OCI-LY7 (cell line): ENCODE measurements at regions of chr1 and their contacts with region 1.

Region 1: DNA sequence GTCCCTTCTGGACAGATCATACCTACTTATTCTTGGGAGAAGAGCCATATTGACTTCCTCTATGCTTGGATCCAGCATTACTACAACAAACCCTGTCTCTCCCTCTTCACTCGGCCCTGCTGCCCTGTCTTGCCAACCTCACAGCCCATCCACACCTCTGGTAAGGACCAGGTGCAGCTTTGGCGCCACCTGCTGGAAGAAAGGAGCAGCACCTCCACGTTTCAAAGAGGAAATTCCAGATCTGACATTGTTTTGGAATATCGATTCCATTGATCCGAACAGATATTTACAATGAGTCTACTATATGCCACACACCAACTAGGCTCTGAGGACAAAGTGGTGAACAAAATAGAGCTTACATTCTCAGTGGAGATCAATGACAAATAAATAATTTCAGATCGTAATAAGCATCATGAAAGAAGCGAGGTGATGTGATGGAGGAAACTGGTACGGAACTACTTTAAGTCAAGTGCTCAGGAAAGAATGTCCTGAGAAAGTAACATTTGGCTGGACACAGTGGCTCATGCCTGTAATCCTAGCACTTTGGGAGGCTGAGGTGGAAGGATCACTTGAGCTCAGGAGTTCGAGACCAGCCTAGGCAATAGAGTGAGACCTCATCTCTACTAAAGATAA is 18.7 kb downstream of the MFSD2A start:
- DNase-seq: peak; percentile 77
- H3K4me3 ChIP-seq: no peak overlapping the region
- H3K27ac ChIP-seq: no peak overlapping the region
- H3K4me1 ChIP-seq: no peaks in the 10 kb centered on the region
- CTCF ChIP-seq: peak; percentile 100

Region 2: DNA sequence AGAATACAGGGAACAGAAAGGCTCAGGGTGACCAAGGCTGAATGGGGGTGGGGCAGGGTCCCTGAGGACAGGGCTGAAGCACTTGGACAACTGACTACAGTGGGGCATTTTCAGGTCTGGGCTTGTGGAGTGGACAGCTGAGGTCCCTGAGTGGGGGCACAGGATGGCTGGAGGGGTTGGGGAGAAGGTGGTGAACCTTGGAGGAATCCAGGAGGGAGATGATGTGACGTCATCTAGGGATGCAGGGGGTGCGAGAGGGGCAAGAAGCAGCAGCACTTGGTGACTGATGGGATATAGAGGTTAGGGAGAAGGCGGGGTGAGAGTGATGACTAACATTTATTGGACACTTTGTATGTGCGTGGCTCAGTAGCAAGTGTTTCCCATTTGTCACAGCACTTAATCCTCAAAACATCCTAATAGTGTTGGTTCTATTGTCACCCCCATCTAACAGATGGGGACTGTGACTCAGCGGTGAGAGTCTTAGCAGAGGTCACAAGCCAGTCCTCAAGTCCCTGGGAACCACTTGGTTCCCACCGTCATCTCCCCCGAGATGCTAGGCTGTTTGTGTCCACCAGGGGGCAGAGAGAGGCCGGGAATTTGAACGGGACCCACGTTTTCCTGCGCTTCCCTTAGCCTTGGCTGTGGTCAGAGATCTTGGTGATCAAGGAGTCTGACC is 157.1 kb before region 1 on chr1:
- CTCF ChIA-PET with region 1: no interaction called
- POLR2A ChIA-PET with region 1: no interaction called
- intact Hi-C with region 1: loop called (anchors 1 kb)
- DNase-seq: peak; percentile 77
- H3K4me3 ChIP-seq: peak overlapping the region; percentile 54
- H3K27ac ChIP-seq: peak overlapping the region; percentile 52
- H3K4me1 ChIP-seq: no peaks in the 10 kb centered on the region
- CTCF ChIP-seq: peak; percentile 80

Region 3: GRCh38 chr1:39919545-39919944 is 54.1 kb before region 1 on chr1:
- CTCF ChIA-PET with region 1: interaction called, 7 read pairs
- POLR2A ChIA-PET with region 1: interaction called, 4 read pairs
- intact Hi-C with region 1: loop called (anchors 1 kb)
- DNase-seq: peak; percentile 80
- H3K4me3 ChIP-seq: no peak overlapping the region
- H3K27ac ChIP-seq: no peak overlapping the region
- H3K4me1 ChIP-seq: no peaks in the 10 kb centered on the region
- CTCF ChIP-seq: peak; percentile 87

Region 4: DNA sequence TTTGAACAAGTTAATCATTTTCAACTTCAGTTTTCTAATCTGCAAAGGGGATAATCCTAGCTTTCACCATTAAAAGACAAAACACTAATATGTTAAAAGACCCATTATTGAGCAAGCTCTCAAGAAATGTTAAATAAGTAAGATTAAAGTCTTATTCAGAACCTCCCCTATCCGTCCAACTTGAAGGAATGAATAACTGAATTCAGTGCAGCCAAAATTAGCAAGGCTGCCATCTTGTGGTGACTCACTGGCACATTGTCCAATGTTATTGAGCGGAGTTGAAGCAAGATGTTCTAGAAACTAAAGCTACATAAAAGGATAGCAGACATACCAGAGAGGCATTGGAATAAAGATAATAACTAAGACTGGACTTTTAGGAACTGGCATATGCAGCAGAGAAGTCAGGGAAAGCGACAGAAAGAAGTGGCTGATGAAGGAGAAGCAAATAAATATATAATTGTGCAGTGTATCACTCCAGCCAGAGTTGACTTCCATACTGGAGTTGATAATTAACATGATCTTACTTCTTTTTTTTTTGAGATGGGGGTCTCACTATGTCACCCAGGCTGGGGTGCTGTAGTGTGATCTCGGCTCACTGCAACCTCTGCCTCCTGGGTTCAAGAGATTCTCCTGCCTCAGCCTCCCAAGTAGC is 58.7 kb after region 1 on chr1:
- CTCF ChIA-PET with region 1: no interaction called
- POLR2A ChIA-PET with region 1: no interaction called
- intact Hi-C with region 1: loop called (anchors 1 kb)
- DNase-seq: peak; percentile 72
- H3K4me3 ChIP-seq: no peak overlapping the region
- H3K27ac ChIP-seq: no peak overlapping the region
- H3K4me1 ChIP-seq: peaks cover 16% of the 10 kb centered on the region
- CTCF ChIP-seq: peak; percentile 97